ENCODE measurements at regions of chr7 and their contacts with region 1.

Region 1: GRCh38 chr7:139777948-139778841 is at the start of gene HIPK2:
- DNase-seq: peak; percentile 79 to 83
- H3K4me3 ChIP-seq: peak within 1 kb of the TSS; percentile 56 to 89 (median 64)
- H3K27ac ChIP-seq: peak within 1 kb of the TSS; percentile 44 to 95 (median 94)
- H3K4me1 ChIP-seq: peaks cover 6 to 21% of the 10 kb centered on the region in 2 donors
- H3K27me3 ChIP-seq: no peaks in the 10 kb centered on the region
- CTCF ChIP-seq: no peak
- POLR2A ChIP-seq: peak in 1 of 2 donors; percentile 9
- total RNA-seq, gene HIPK2: 31.3 to 58.5 (median 41.0) TPM

Region 2: DNA sequence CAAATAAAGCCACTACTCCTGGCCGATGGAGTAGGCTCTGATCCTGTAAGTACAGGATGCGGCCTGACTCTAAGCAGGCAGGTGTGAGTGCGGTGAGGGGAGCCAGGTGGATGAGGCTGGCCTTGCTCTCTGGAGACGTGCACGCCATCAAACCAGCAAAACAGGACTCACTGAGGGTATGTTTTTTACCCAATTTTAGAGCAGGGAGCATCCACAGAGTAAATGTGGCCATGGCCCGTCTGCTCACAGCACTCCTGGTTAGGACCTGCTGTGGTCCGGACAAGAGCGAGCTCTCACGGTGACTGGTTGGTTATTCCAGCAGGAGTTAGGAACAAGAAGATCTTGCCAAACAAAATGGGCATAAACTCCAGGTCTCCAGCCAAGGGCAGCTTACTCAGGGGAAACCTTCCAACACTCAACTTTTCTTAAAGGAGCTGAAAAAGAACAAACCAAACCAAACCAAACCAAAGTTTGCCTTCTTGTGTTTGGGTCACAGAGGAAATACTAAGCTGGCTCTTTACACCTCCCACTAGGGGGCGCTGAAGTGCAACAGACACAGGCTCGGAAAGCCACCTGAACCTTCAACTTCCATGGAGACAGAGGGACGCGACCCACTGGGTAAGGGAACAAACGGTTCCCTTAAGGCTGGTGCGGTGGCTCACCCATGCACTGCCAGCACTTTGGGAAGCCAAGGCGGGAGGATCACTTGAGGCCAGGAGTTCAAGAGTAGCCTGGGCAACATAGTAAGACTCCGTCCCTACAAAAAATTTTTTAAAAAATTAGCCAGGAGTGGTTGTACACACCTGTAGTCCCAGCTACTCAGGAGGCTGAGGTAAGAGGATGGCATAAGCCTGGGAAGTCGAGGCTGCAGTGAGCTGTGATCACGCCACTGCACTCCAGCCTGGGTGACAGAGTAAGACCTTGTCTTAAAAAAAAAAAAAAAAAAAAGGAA is 132.3 kb before region 1 on chr7:
- intact Hi-C with region 1: loop called (anchors 5 kb)
- DNase-seq: peak; percentile 85 to 94
- H3K4me3 ChIP-seq: no peak overlapping the region
- H3K27ac ChIP-seq: no peak overlapping the region
- H3K4me1 ChIP-seq: peaks cover 0 to 15% of the 10 kb centered on the region in 2 donors
- H3K27me3 ChIP-seq: no peaks in the 10 kb centered on the region
- CTCF ChIP-seq: peak; percentile 87 to 94 (median 92)
- POLR2A ChIP-seq: no peak

Region 3: GRCh38 chr7:139855498-139856270 is 77.5 kb after region 1 on chr7:
- intact Hi-C with region 1: no loop called
- DNase-seq: no peak
- H3K4me3 ChIP-seq: no peak overlapping the region
- H3K27ac ChIP-seq: no peak overlapping the region
- H3K4me1 ChIP-seq: no peaks in the 10 kb centered on the region
- H3K27me3 ChIP-seq: no peaks in the 10 kb centered on the region
- CTCF ChIP-seq: no peak
- POLR2A ChIP-seq: no peak

Measured in thyroid gland (tissue), 4 donors.